ENCODE measurements at regions of chr12 and their contacts with region 1.

Region 1: DNA sequence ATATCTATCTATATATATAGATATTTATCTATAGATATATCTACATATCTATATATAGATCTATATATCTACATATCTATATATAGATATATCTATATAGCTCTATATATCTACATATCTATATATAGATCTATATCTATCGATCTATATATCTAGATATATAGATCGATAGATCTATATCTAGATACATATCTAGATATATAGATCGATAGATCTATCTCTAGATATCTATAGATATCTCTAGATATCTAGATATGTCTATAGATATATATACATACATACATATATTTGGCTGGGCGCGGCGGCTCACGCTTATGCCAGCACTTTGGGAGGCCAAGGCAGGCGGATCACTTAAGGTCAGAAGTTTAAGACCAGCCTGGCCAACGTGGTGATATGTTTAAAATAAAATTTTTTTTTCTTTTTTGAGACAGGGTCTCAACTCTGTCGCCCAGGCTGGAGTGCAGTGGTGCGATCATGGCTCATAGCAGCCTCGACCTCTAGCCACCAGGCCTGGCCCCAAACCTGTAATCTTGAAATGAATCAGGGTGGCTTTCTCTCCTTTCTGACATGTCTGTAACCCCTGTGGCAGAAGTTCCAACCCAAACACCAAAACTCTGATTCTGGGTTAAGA is 18.1 kb downstream of the ARPC3 start:
- DNase-seq: no peak
- H3K4me3 ChIP-seq: peak overlapping the region; percentile 43
- H3K4me3 Mint-ChIP-seq: peak overlapping the region; percentile 91
- H3K27ac Mint-ChIP-seq: peak overlapping the region; percentile 94
- H3K4me1 ChIP-seq: 0 out of 2 replicates have a peak, but pooled peaks cover 3% of the 10 kb centered on the region
- H3K4me1 Mint-ChIP-seq: no peaks in the 10 kb centered on the region
- H3K27me3 ChIP-seq: no peaks in the 10 kb centered on the region
- H3K27me3 Mint-ChIP-seq: no peaks in the 10 kb centered on the region
- CTCF ChIP-seq: no peak

Region 2: DNA sequence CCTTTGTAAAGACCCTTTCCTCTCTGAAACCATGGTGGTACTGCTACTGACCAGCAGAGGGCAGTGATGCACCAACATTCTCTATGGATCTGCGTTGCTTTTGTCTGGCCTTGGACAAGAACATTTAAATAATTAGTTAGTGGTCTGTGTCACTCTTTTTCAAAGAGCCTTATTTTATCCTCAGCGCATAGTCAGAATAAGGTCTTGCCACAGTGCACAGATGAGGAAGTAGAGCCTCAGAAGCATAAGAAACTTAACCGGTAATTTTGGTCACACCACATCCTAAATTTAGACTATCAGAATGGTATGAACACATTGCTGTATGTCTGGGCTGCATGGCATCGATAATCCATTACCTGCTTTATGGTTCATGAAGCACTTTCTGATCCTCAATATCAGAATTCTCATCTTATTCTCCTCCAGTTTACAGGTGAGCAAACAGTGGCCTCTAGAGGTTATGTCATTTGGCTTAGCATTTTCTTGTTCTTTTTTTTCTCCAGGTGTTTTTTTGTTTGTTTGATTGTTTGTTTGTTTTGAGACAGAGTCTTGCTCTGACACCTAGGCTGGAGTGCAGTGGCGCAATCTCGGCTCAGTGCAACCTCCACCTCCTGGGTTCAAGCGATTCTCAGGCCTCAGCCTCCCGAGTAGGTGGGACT is 331.6 kb before region 1 on chr12:
- CTCF ChIA-PET with region 1: interaction called, 19 read pairs
- POLR2A ChIA-PET with region 1: interaction called, 4 read pairs
- intact Hi-C with region 1: no loop called
- DNase-seq: peak; percentile 65 to 75
- H3K4me3 ChIP-seq: no peak overlapping the region
- H3K4me3 Mint-ChIP-seq: no peak overlapping the region
- H3K27ac Mint-ChIP-seq: no peak overlapping the region
- H3K4me1 ChIP-seq: peaks cover 3% of the 10 kb centered on the region; the same call in 1 of the 2 replicates
- H3K4me1 Mint-ChIP-seq: no peaks in the 10 kb centered on the region
- H3K27me3 ChIP-seq: no peaks in the 10 kb centered on the region
- H3K27me3 Mint-ChIP-seq: no peaks in the 10 kb centered on the region
- CTCF ChIP-seq: peak; percentile 86 to 91

Region 3: DNA sequence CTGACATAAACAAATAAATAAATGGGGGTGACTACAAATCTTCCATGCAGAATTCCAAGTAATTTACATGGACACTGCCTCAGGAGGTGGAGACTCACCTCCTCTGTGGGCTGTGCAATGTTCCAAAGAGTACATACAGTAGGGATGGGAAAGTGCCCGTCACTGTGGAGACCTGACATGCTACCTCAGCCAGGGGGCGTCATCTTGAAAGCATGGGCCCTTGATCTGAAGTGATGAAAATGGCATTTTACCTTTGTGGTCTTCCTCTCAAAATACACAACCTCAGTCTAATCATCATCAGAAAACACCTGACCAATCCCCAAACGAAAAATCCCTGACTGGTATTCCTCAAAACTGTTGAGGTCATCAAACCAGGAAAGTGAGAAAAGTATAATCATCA is 77.0 kb before region 1 on chr12:
- CTCF ChIA-PET with region 1: interaction called, 7 read pairs
- POLR2A ChIA-PET with region 1: interaction called, 3 read pairs
- intact Hi-C with region 1: loop called (anchors 1 kb)
- DNase-seq: peak; percentile 46 to 56
- H3K4me3 ChIP-seq: no peak overlapping the region
- H3K4me3 Mint-ChIP-seq: no peak overlapping the region
- H3K27ac Mint-ChIP-seq: no peak overlapping the region
- H3K4me1 ChIP-seq: no peaks in the 10 kb centered on the region
- H3K4me1 Mint-ChIP-seq: no peaks in the 10 kb centered on the region
- H3K27me3 ChIP-seq: no peaks in the 10 kb centered on the region
- H3K27me3 Mint-ChIP-seq: no peaks in the 10 kb centered on the region
- CTCF ChIP-seq: peak in 1 of 2 experiments; percentile 62

Region 4: DNA sequence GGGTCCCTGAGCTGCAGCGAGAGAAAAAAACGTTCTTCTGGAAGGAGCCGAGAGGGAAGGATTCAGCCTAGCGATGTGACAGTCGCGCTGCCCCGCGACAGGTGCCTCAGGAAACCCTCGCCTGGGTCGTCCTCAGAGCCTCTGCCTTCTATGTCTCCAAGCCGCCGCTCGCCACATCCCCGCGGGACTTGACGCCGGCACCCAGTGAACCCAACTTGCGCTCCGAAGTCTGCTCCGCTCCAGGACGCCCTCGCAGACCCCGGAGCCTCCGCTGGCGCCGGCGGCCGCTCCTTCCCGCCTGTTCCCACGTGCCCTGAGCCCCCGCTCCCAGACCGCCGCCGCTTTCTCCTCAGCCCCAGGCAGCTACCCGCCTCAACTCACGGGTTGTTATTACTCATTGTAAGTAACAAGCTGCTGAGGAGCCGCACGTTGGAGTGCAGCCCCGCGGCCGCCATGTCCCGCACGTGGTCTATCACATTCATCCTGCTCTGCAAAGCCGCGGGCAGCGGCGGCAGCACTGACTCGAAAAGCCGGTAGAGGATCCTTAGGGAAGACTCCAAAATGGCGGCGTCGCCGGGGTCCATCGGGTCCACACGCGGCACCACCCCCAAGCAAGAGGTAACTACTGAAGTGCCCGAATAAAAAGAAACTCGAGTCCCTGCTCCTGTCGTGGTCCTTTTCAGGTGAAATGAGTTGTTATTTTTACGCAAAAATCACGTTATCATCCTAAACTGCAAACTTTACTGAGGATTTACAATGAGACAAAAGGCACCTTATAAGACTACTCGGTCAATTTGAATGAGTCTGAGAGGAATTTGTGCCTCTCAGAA is 28.7 kb before region 1 on chr12 and contains the start of gene ANAPC7:
- CTCF ChIA-PET with region 1: interaction called, 18 read pairs
- POLR2A ChIA-PET with region 1: no interaction called
- intact Hi-C with region 1: loop called (anchors 1 kb)
- DNase-seq: peak; percentile 94
- H3K4me3 ChIP-seq: peak within 1 kb of the TSS; percentile 62
- H3K4me3 Mint-ChIP-seq: peak within 1 kb of the TSS; percentile 97
- H3K27ac Mint-ChIP-seq: peak within 1 kb of the TSS; percentile 99
- H3K4me1 ChIP-seq: peaks cover 4% of the 10 kb centered on the region; the same call in 1 of the 2 replicates
- H3K4me1 Mint-ChIP-seq: no peaks in the 10 kb centered on the region
- H3K27me3 ChIP-seq: no peaks in the 10 kb centered on the region
- H3K27me3 Mint-ChIP-seq: no peaks in the 10 kb centered on the region
- CTCF ChIP-seq: peak in 1 of 2 experiments; percentile 28
- total RNA-seq, gene ANAPC7: 90.4 and 93.8 TPM in 2 replicates

Region 5: DNA sequence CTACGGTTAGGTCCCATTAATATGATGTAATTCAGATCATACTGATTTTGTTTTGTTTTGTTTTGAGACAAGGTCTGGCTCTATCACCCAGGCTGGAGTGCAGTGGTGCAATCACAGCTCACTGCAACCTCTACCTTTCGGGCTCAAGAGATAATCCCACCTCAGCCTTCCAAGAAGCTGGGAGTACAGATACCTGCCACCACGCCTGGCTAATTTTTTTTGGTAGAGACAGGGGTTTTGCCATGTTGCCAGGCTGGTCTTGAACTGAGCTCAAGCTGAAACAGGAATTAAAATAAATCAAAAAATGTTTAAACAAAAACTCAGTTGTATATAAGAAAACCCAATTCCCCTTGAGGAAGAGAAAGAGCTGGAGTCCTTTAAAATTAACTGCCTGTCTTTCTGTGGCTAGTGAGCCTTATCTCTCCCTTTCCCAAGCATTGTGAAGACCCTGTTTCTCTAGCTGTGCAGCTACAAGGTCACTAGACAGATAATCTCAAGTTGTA is 10.9 kb before region 1 on chr12:
- CTCF ChIA-PET with region 1: interaction called, 15 read pairs
- POLR2A ChIA-PET with region 1: interaction called, 3 read pairs
- intact Hi-C with region 1: no loop called
- DNase-seq: no peak
- H3K4me3 ChIP-seq: no peak overlapping the region
- H3K4me3 Mint-ChIP-seq: no peak overlapping the region
- H3K27ac Mint-ChIP-seq: no peak overlapping the region
- H3K4me1 ChIP-seq: no peaks in the 10 kb centered on the region
- H3K4me1 Mint-ChIP-seq: peaks cover 5% of the 10 kb centered on the region
- H3K27me3 ChIP-seq: no peaks in the 10 kb centered on the region
- H3K27me3 Mint-ChIP-seq: no peaks in the 10 kb centered on the region
- CTCF ChIP-seq: no peak

Region 6: DNA sequence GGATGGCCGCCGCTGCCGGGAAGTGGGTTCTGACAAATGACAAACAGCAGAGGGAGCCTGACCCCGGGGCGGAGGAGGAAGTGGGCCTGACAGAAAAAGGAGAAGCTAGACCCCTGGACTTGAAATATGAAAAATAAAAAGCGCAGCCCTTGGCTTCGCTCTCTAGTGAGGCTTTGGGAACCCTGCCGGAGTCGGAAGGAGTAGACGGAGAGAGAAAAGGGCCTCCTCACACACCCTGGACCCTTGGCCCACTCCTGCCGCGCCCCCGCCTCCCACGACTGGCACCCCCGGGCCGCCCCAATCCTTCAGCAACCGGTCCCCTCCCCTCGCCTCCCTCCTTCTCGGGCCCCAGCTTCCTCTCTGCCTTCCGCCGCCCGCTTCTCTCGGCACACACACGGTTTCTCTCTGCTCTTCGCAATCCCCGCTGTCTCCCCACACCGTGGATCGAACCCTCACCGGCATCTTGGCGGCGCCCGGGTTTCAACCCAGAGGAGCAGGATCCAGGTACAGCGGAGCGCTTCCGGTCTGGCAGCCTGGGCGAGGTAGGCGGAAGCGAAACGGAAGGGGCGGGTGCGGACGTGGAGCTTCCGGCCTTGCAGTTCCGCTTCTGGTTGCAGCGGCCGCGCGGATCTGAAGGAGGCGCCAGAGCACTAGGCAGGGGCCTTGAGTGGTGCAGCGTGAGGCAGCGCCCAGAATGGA is 17.9 kb after region 1 on chr12 and contains the start of gene ARPC3:
- CTCF ChIA-PET with region 1: interaction called, 11 read pairs
- POLR2A ChIA-PET with region 1: interaction called, 3 read pairs
- intact Hi-C with region 1: no loop called
- DNase-seq: peak; percentile 96
- H3K4me3 ChIP-seq: peak within 1 kb of the TSS; percentile 90
- H3K4me3 Mint-ChIP-seq: peak within 1 kb of the TSS; percentile 85
- H3K27ac Mint-ChIP-seq: peak within 1 kb of the TSS; percentile 98
- H3K4me1 ChIP-seq: peaks cover 5% of the 10 kb centered on the region
- H3K4me1 Mint-ChIP-seq: no peaks in the 10 kb centered on the region
- H3K27me3 ChIP-seq: no peaks in the 10 kb centered on the region
- H3K27me3 Mint-ChIP-seq: no peaks in the 10 kb centered on the region
- CTCF ChIP-seq: peak; percentile 79 to 89
- total RNA-seq, gene ARPC3: 302 and 309 TPM in 2 replicates

Region 7: DNA sequence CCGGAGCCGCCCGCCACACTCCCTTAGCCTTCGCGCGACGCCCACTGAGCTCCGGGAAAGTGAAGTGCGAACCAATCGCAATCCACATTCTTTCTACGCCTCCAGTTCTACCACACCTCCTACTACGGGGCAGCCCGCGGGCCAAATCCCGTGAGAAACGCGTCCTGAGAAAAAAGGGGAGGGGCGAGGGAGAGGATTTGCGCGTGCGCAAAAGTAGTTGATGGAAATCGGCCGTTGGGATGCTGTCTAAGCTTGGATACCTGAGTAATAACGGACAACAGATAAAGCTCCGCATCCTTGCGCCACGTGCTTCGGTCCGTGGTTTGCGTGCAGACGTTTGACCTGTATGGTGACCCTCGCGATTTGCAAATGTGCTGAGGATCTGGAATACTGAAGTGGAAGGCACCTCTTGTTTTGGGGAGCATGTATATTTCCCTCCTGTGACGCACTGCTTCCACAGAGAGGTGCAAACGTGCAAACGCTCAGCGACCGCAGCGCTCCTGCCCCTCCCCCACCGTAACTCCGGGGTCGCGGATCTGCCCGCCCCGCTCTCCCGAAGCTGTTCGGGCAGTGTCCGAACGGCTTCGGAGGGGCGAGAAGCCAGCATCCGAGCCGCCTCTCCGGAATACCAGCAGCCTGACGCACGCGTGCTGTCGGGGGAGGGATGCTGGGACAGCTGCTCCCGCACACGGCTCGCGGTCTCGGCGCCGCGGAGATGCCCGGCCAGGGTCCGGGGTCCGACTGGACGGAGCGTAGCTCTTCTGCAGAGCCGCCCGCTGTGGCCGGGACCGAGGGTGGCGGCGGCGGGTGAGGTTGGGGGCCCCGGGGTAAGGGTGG is 36.4 kb after region 1 on chr12 and contains the starts of genes FAM216A and GPN3:
- CTCF ChIA-PET with region 1: interaction called, 13 read pairs
- POLR2A ChIA-PET with region 1: no interaction called
- intact Hi-C with region 1: no loop called
- DNase-seq: peak; percentile 97 to 98
- H3K4me3 ChIP-seq: peak within 1 kb of the TSS; percentile 62
- H3K4me3 Mint-ChIP-seq: peak within 1 kb of the TSS; percentile 82
- H3K27ac Mint-ChIP-seq: peak within 1 kb of the TSS; percentile 94
- H3K4me1 ChIP-seq: no peaks in the 10 kb centered on the region
- H3K4me1 Mint-ChIP-seq: no peaks in the 10 kb centered on the region
- H3K27me3 ChIP-seq: no peaks in the 10 kb centered on the region
- H3K27me3 Mint-ChIP-seq: no peaks in the 10 kb centered on the region
- CTCF ChIP-seq: no peak
- total RNA-seq, gene FAM216A: 13.1 and 15.9 TPM in 2 replicates
- total RNA-seq, gene GPN3: 35.0 and 39.0 TPM in 2 replicates